ENCODE measurements at regions of chr12 and their contacts with region 1.

Region 1: DNA sequence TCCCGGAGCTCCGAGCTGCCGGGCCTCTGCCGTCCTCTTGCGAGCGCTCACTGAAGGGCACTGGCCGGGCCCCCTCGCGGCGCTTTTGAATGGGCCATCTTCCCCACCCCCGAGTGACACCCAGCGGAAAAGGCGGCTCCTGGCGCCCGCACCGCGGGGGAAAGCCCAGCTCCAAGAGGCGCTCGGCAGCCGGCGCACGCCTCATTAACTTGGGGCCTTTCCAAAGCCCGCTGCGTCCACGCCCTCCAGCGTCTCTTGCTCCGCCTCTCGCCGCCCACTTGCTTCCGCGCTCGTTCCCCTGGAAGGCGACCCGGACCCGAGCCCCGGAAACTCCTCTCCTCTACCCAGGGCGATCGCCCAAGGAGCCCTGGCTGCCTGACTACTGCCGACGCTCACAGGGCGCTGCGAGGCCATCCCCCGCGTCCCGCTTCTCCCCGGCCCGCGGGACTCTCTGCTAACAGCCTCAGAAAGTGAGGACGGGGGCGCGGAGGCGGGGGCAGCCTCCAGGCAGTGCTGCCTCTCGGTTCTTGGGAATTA is at the start of gene PHLDA1:
- DNase-seq: peak; percentile 97
- H3K4me3 Mint-ChIP-seq: peak within 1 kb of the TSS; percentile 96
- H3K27ac Mint-ChIP-seq: peak within 1 kb of the TSS; percentile 94
- H3K4me1 Mint-ChIP-seq: peaks cover 34% of the 10 kb centered on the region
- H3K27me3 Mint-ChIP-seq: no peaks in the 10 kb centered on the region
- total RNA-seq, gene PHLDA1: 23.8 to 24.4 TPM

Region 2: DNA sequence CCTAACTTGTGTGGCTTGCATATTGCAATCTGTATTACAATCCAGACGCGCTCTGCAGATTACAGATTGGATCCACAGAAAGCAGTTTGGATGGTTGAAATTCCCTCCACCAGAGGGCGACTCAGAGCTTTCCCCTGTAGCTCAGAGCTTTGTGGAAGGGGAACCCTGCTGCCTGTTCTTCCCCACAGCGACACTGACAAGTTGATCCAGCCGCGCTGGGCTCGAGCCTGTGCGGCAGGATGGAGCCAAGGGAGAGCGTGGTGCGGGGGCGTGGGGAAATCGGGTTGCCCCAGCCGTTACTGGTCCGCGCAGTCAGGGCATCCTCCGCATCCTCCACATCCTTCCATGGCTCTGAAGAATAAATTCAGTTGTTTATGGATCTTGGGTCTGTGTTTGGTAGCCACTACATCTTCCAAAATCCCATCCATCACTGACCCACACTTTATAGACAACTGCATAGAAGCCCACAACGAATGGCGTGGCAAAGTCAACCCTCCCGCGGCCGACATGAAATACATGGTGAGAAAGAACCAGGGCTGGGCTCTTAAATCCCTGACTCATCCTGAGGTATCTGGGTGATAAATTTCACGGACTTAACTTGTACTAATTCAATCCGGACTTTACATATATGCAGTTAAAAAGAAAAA is 697.1 kb before region 1 on chr12 and contains the start of gene GLIPR1L1:
- CTCF ChIA-PET with region 1: interaction called, 3 read pairs
- POLR2A ChIA-PET with region 1: no interaction called
- intact Hi-C with region 1: loop called (anchors 1 kb)
- DNase-seq: peak; percentile 88
- H3K4me3 Mint-ChIP-seq: peak within 1 kb of the TSS; percentile 59
- H3K27ac Mint-ChIP-seq: no peak within 1 kb of the TSS
- H3K4me1 Mint-ChIP-seq: peaks cover 22% of the 10 kb centered on the region
- H3K27me3 Mint-ChIP-seq: peaks cover 16% of the 10 kb centered on the region
- total RNA-seq, gene GLIPR1L1: not detected

Region 3: GRCh38 chr12:75432924-75433323 is 598.7 kb before region 1 on chr12:
- CTCF ChIA-PET with region 1: no interaction called
- POLR2A ChIA-PET with region 1: no interaction called
- intact Hi-C with region 1: no loop called
- DNase-seq: no peak
- H3K4me3 Mint-ChIP-seq: no peak overlapping the region
- H3K27ac Mint-ChIP-seq: no peak overlapping the region
- H3K4me1 Mint-ChIP-seq: peaks cover 4% of the 10 kb centered on the region
- H3K27me3 Mint-ChIP-seq: no peaks in the 10 kb centered on the region

Region 4: DNA sequence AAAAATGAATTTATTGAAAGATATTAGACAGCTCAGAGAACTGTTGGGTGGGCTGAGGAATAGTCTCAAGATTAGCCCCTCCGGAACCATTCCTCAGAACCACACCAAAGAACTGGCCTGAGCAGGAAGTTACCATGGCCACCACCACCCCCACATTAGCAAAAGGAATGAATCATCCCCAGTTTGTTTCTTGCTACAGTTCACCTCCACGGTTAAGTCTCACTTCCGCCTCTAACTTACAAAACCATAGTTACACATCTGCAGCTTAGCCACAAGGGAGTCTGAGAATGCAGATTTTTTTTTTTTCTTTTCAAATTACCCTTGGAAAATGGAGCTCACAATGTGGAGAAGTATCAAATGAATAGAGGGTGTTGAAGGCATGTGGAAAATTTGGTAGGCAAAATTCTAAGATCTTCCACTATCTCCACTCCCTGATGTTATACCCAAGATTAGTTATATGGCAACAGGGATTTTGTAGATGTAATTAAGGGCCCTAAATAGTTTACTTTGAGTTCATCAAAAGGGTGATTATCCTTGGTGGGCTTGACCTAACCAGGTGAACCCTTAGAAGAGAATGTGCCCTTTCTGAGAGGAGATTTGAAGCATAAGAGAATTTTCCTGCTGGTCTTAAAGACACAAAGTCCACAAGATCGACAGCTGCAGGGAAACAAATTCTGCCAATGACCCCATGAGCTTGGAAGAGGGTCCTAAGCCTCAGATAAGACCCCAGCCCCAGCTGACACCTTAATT is 390.4 kb before region 1 on chr12:
- CTCF ChIA-PET with region 1: interaction called, 7 read pairs
- POLR2A ChIA-PET with region 1: interaction called, 6 read pairs
- intact Hi-C with region 1: loop called (anchors 5 kb)
- DNase-seq: peak; percentile 67
- H3K4me3 Mint-ChIP-seq: no peak overlapping the region
- H3K27ac Mint-ChIP-seq: no peak overlapping the region
- H3K4me1 Mint-ChIP-seq: peaks cover 31% of the 10 kb centered on the region
- H3K27me3 Mint-ChIP-seq: peaks cover 3% of the 10 kb centered on the region

Region 5: GRCh38 chr12:75814851-75815754 is 216.5 kb before region 1 on chr12:
- CTCF ChIA-PET with region 1: interaction called, 21 read pairs
- POLR2A ChIA-PET with region 1: interaction called, 3 read pairs
- intact Hi-C with region 1: loop called (anchors 1 kb)
- DNase-seq: no peak
- H3K4me3 Mint-ChIP-seq: no peak overlapping the region
- H3K27ac Mint-ChIP-seq: no peak overlapping the region
- H3K4me1 Mint-ChIP-seq: peaks cover 22% of the 10 kb centered on the region
- H3K27me3 Mint-ChIP-seq: no peaks in the 10 kb centered on the region

Region 6: DNA sequence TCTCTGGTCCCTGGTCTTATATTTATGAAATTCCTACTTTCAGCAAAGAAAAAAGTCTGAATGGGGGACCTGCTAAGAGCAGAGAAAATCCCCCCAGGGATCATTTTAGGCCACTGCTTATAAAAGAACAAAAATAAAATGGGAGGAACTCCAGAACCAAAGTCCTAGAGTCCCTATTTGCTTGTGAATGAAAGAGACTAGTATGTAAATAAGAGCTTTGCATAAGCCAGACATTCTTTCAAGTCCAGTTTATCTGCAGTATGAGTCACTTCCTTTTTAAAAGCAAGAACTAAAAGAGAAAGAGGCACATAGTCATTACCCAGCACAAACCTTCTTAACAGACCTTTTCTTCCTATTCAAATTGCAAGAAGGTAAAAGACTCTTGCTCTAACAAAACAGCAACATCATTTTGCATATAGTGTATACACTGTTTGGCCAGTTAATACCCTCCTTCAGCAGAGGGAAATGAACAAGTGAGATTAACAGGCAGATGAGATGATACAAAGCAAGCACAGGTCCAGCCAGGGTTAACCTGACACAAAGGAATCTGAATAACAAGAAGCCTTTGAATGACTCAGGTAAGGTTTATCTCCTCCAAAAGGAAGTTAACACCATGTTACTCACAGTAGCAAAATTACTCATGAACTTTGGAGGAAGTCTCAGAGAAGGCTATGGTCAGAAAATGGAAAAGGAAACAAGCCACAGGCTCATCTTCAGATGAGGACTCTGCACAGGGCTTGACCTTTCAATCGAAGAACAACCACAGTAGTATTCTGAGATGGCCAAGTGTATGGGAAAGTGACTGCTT is 87.3 kb before region 1 on chr12:
- CTCF ChIA-PET with region 1: interaction called, 7 read pairs
- POLR2A ChIA-PET with region 1: interaction called, 11 read pairs
- intact Hi-C with region 1: loop called (anchors 1 kb)
- DNase-seq: peak; percentile 42
- H3K4me3 Mint-ChIP-seq: peak overlapping the region; percentile 34
- H3K27ac Mint-ChIP-seq: peak overlapping the region; percentile 95
- H3K4me1 Mint-ChIP-seq: peaks cover 29% of the 10 kb centered on the region
- H3K27me3 Mint-ChIP-seq: no peaks in the 10 kb centered on the region

Region 7: GRCh38 chr12:76020731-76021672 is 10.6 kb before region 1 on chr12:
- CTCF ChIA-PET with region 1: interaction called, 41 read pairs
- POLR2A ChIA-PET with region 1: interaction called, 88 read pairs
- intact Hi-C with region 1: loop called (anchors 1 kb)
- DNase-seq: peak; percentile 90
- H3K4me3 Mint-ChIP-seq: peak overlapping the region; percentile 68
- H3K27ac Mint-ChIP-seq: peak overlapping the region; percentile 99
- H3K4me1 Mint-ChIP-seq: peaks cover 60% of the 10 kb centered on the region
- H3K27me3 Mint-ChIP-seq: no peaks in the 10 kb centered on the region

Region 8: DNA sequence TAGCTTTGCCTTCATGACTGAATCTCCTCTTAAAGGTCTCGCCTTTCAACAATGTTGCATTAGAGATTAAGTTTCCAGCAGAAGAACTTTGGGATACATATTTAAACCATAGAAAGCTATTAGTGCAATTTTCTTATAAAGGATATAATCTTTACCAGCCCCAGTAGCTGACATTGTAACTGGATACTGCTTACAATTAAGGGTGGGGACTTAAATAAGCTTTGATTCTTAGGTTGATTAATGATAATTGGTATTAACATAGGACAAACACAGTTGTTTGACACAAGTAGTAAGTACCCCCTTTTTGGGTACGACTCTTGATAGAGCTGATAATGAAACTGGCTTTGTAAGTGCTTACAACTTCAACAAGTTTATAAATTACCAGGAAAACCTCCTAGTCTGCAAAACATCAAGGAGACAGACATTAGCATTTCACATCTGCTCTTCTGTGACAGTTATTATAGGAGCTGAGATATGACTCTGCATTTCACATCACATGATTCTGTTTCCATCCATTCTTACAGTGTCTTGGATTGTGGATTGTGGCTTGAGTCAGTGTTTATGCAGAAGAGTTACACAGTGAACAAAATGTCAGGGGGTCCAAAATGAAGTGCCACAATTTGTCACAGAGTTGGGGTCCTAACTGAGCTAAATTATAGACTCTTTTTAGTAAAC is 1282.9 kb after region 1 on chr12:
- CTCF ChIA-PET with region 1: no interaction called
- POLR2A ChIA-PET with region 1: no interaction called
- intact Hi-C with region 1: no loop called
- DNase-seq: no peak
- H3K4me3 Mint-ChIP-seq: no peak overlapping the region
- H3K27ac Mint-ChIP-seq: no peak overlapping the region
- H3K4me1 Mint-ChIP-seq: no peaks in the 10 kb centered on the region
- H3K27me3 Mint-ChIP-seq: peaks cover 1% of the 10 kb centered on the region